ENCODE measurements at regions of chr3 and their contacts with region 1.

Region 1: DNA sequence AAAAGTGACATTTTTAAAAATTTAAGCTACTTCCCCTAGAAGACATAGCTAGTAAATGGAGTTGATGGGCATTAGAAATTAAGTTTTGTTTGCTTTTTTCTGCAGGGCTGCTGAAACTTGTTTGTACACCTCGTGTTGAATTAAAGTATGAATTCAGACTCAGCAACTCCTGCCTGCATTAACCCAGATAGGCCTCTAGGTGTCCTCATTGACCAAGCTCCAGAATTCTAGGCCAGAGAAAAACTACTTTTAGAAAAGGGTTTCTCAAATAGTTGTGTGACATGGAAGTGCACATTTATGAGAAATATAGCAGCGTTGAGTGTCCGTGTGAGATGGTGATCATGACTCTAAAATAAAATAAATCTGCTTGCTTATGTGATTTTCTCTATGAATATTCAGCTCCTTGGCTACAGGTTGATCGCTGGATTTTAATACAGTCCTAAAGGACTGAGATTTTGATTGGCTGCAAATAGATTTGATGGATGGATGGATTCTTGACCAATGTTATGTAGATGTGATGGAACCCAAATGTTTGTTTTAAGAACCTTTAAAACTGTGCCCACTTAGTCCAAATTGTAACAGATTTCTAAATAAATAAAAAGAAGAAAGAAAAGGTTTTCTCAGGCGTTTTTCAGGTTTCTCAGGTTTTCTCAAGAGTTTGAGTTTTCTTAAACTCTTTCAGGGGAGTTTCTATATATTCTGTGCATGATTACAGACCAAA is 39.4 kb upstream of the LMOD3 start:
- DNase-seq: peak; percentile 56
- H3K4me3 Mint-ChIP-seq: no peak overlapping the region
- H3K27ac Mint-ChIP-seq: no peak overlapping the region
- H3K4me1 Mint-ChIP-seq: peaks cover 11% of the 10 kb centered on the region
- H3K27me3 Mint-ChIP-seq: peaks cover 1% of the 10 kb centered on the region

Region 2: GRCh38 chr3:69236812-69237707 is 75.3 kb after region 1 on chr3:
- CTCF ChIA-PET with region 1: interaction called, 13 read pairs
- intact Hi-C with region 1: loop called (anchors 1 kb)
- DNase-seq: peak; percentile 17
- H3K4me3 Mint-ChIP-seq: peak overlapping the region; percentile 66
- H3K27ac Mint-ChIP-seq: peak overlapping the region; percentile 50
- H3K4me1 Mint-ChIP-seq: peaks cover 18% of the 10 kb centered on the region
- H3K27me3 Mint-ChIP-seq: no peaks in the 10 kb centered on the region

Region 3: GRCh38 chr3:69300296-69300695 is 138.5 kb after region 1 on chr3:
- CTCF ChIA-PET with region 1: interaction called, 312 read pairs
- intact Hi-C with region 1: no loop called
- DNase-seq: no peak
- H3K4me3 Mint-ChIP-seq: no peak overlapping the region
- H3K27ac Mint-ChIP-seq: no peak overlapping the region
- H3K4me1 Mint-ChIP-seq: peaks cover 11% of the 10 kb centered on the region
- H3K27me3 Mint-ChIP-seq: no peaks in the 10 kb centered on the region

Region 4: GRCh38 chr3:69410250-69410649 is 248.5 kb after region 1 on chr3:
- CTCF ChIA-PET with region 1: interaction called, 18 read pairs
- intact Hi-C with region 1: loop called (anchors 1 kb)
- DNase-seq: peak; percentile 88
- H3K4me3 Mint-ChIP-seq: no peak overlapping the region
- H3K27ac Mint-ChIP-seq: no peak overlapping the region
- H3K4me1 Mint-ChIP-seq: peaks cover 3% of the 10 kb centered on the region
- H3K27me3 Mint-ChIP-seq: peaks cover 5% of the 10 kb centered on the region

Region 5: DNA sequence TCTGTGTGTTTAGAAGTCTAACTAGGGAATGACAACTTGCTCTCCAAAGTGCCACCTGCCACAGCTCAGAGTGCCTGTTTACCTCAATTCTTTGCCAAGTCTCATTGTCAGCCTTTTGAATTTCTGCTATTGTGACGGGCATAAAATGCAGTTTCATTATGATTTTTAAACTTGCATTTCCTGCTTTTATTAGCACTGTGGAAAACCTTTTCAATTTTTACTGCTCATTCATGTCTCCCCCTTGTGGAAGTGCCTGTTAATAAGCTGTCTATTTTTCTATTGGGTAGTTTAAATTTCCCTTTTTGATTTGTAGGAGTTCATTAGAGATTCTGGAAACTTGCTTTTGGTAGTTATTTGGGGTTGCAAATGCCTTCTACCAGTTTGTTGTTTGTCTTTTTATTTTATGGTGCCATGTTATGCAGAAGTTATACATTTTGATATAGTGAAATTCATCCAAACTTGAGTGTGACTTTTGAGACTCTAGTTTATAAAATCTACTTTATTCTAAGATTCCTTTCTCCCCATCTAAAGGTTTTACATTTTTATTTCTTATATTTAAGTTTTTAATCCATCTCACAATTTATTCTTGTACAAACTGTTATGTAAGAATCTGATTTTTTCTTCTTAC is 278.0 kb after region 1 on chr3:
- CTCF ChIA-PET with region 1: interaction called, 9 read pairs
- intact Hi-C with region 1: loop called (anchors 1 kb)
- DNase-seq: peak; percentile 15
- H3K4me3 Mint-ChIP-seq: no peak overlapping the region
- H3K27ac Mint-ChIP-seq: peak overlapping the region; percentile 48
- H3K4me1 Mint-ChIP-seq: peaks cover 58% of the 10 kb centered on the region
- H3K27me3 Mint-ChIP-seq: peaks cover 5% of the 10 kb centered on the region

Region 6: GRCh38 chr3:69948246-69948862 is 786.6 kb after region 1 on chr3:
- CTCF ChIA-PET with region 1: no interaction called
- intact Hi-C with region 1: loop called (anchors 5 kb)
- DNase-seq: no peak
- H3K4me3 Mint-ChIP-seq: no peak overlapping the region
- H3K27ac Mint-ChIP-seq: no peak overlapping the region
- H3K4me1 Mint-ChIP-seq: no peaks in the 10 kb centered on the region
- H3K27me3 Mint-ChIP-seq: no peaks in the 10 kb centered on the region